Naive thymus-derived CD8-positive, alpha-beta T cell (primary cell): ENCODE measurements at regions of chr1 and their contacts with region 1.

Region 1: GRCh38 chr1:89833183-89834082 is 12.6 kb downstream of the LRRC8D start:
- DNase-seq: no peak
- ATAC-seq: no peak
- H3K4me3 Mint-ChIP-seq: no peak overlapping the region
- H3K27ac Mint-ChIP-seq: peak overlapping the region in 1 of 10 donors; percentile 26
- H3K4me1 Mint-ChIP-seq: peaks cover 9 to 34% (median 23%) of the 10 kb centered on the region in 4 donors
- H3K27me3 Mint-ChIP-seq: no peaks in the 10 kb centered on the region

Region 2: GRCh38 chr1:89820422-89821321 is 12.8 kb before region 1 on chr1 and contains the start of gene LRRC8D:
- POLR2A ChIA-PET with region 1: interaction called, 10 read pairs
- DNase-seq: peak; percentile 46 to 80 (median 58)
- ATAC-seq: peak; percentile 64 to 71
- H3K4me3 Mint-ChIP-seq: peak within 1 kb of the TSS; percentile 85 to 96 (median 92)
- H3K27ac Mint-ChIP-seq: peak within 1 kb of the TSS; percentile 82 to 97 (median 92)
- H3K4me1 Mint-ChIP-seq: peaks cover 29 to 62% (median 52%) of the 10 kb centered on the region in 4 donors
- H3K27me3 Mint-ChIP-seq: no peaks in the 10 kb centered on the region
- polyA plus RNA-seq, gene LRRC8D: 42.3 to 60.0 (median 46.0) TPM

Region 3: DNA sequence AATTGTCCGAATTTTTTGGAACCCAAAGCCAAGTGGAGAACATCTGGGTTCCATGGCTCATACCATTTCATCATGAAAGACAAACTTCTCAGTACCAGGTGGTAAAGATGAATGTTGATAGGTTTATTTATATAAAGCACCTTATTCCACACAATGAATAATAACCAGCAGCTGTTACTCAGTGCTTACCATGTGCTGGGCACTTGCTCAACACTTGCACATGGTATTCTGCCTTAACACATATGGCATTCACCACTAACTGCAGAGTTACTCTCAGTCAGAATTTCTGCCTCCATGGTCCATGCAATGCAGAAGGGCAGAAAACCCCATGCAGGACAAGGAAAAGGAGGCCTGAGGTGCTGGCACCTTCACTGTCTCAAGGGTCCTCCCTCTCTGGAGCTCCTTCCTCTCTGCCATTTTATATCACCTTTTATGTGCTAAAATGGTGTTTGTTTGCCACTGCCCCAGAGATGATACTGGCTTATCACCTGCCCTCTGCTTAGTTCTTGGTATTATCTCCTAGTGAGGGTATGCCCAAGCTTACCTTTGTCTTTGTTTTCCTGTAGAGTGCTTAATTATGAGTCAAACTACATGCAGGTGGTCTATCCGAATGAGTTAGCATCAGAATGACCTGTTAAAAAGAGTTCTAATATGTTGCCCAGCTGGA is 84.8 kb after region 1 on chr1:
- POLR2A ChIA-PET with region 1: no interaction called
- DNase-seq: no peak
- ATAC-seq: no peak
- H3K4me3 Mint-ChIP-seq: no peak overlapping the region
- H3K27ac Mint-ChIP-seq: peak overlapping the region in 2 of 10 donors; percentile 25 to 46
- H3K4me1 Mint-ChIP-seq: peaks cover 13 to 41% (median 23%) of the 10 kb centered on the region in 4 donors
- H3K27me3 Mint-ChIP-seq: no peaks in the 10 kb centered on the region

Region 4: DNA sequence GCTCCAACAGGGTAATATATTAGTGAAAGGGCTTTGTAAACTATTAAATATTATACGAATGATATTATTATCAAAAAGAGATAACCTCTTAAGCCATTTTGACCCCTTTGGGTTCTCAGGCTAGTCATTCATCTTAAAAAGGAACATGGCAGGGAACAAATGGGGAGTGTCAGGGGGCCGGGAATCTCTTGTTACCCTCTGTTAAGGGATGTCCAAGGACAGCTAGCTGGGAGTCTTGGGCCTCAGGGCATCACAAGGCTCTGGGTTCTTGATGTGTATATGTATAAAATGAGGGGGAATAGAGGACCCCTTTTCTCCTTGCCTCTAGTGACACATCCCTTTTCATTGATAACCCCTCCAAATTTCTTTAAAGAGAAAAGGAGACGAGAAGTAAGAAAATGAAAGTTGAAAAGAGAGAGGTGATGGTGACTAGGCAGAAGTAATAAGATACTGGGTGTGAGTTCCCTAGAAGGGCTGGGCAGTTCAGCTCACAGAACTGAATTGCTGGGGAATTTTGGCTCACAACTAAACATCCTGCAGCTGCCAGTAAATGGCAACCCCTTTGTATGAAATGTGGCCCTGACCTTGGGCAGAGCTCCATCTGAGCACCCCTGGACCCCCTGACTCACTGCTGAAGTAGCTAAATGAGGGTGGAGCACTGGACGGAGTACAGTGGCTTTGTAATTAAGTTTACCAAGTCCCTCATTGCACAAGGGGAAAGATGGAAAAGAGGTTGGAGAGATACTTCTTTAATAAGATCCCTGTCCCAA is 141.5 kb after region 1 on chr1:
- POLR2A ChIA-PET with region 1: no interaction called
- DNase-seq: no peak
- ATAC-seq: no peak
- H3K4me3 Mint-ChIP-seq: no peak overlapping the region
- H3K27ac Mint-ChIP-seq: no peak overlapping the region
- H3K4me1 Mint-ChIP-seq: peaks cover 0 to 3% (median 0%) of the 10 kb centered on the region in 4 donors
- H3K27me3 Mint-ChIP-seq: peaks cover 0 to 2% (median 0%) of the 10 kb centered on the region in 5 donors